Activated T-helper 2 cell treated with anti-CD3 and anti-CD28 coated beads, Interferon-gamma antibody, Interleukin-2, Interleukin-4, amounts not matched to agents 10 μg/mL and 5 μg/mL and 100 μg/mL, durations not matched to agents 14 hours and 24 hours and 36 hours (primary cell): ENCODE measurements at regions of chr12 and their contacts with region 1.

Region 1: GRCh38 chr12:109713187-109713984 is at the start of gene FAM222A:
- DNase-seq: peak; percentile 94
- H3K4me3 Mint-ChIP-seq: peak within 1 kb of the TSS; percentile 66
- H3K27ac Mint-ChIP-seq: no peak within 1 kb of the TSS
- H3K4me1 Mint-ChIP-seq: no peaks in the 10 kb centered on the region
- H3K27me3 Mint-ChIP-seq: peaks cover 43% of the 10 kb centered on the region
- total RNA-seq, gene FAM222A: 1.4 and 1.6 TPM in 2 replicates

Region 2: DNA sequence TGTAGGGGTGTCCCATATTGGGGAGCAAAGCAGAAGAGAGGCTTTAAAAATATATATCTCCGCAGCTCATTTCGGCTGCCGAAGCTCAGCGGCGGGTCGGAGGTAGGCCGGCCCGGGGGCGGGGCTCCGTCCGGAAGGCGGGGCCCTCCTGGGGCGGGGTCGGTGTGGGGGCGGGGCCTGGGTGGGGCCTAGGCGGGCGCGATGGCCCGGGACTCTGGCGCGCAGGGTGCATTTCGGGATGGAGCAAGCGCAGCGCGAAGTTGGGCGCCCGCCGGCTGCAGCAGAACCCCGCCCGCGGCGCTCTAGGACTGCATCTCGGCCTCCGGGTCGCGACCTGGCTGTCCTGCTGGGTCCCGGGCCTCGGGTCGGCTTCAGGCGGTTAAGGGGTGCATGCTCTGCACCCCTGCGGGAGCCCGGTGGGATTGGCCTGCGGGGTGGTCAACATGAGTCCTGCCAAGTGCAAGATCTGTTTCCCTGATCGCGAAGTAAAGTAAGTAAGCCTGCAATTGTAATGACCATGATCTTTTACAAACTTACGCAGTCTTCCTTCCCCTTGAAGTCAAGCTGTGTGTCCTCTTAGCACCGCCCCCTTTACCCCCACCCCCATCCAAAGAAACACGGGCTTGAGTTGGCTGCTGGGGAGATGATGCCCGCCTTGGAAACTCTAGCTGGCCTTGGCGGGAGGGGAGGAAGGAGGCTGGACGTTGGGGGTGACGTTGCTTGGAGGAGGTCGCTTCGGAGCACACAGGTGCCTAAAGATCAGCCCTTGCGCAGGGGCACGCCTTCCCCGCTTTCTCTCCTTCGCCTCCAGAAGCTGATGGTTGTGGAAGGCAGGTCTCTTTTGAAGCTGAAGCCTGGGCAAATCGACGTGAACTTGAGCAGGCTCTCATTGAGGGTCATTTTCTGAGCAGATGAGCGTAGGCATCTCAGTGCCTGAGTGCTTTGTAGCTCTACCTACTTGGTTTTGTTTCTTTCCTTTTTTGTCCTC is 558.6 kb before region 1 on chr12:
- intact Hi-C with region 1: loop called (anchors 5 kb)
- DNase-seq: peak; percentile 78
- H3K4me3 Mint-ChIP-seq: peak overlapping the region; percentile 82
- H3K27ac Mint-ChIP-seq: peak overlapping the region; percentile 71
- H3K4me1 Mint-ChIP-seq: peaks cover 14% of the 10 kb centered on the region
- H3K27me3 Mint-ChIP-seq: peaks cover 9% of the 10 kb centered on the region

Region 3: GRCh38 chr12:109573029-109573913 is 140.1 kb before region 1 on chr12 and contains the starts of genes MMAB and MVK:
- intact Hi-C with region 1: loop called (anchors 1 kb)
- DNase-seq: peak; percentile 99
- H3K4me3 Mint-ChIP-seq: peak within 1 kb of the TSS; percentile 93
- H3K27ac Mint-ChIP-seq: peak within 1 kb of the TSS; percentile 92
- H3K4me1 Mint-ChIP-seq: peaks cover 30% of the 10 kb centered on the region
- H3K27me3 Mint-ChIP-seq: no peaks in the 10 kb centered on the region
- total RNA-seq, gene MMAB: 56.7 and 59.0 TPM in 2 replicates
- total RNA-seq, gene MVK: 28.7 and 33.6 TPM in 2 replicates

Region 4: DNA sequence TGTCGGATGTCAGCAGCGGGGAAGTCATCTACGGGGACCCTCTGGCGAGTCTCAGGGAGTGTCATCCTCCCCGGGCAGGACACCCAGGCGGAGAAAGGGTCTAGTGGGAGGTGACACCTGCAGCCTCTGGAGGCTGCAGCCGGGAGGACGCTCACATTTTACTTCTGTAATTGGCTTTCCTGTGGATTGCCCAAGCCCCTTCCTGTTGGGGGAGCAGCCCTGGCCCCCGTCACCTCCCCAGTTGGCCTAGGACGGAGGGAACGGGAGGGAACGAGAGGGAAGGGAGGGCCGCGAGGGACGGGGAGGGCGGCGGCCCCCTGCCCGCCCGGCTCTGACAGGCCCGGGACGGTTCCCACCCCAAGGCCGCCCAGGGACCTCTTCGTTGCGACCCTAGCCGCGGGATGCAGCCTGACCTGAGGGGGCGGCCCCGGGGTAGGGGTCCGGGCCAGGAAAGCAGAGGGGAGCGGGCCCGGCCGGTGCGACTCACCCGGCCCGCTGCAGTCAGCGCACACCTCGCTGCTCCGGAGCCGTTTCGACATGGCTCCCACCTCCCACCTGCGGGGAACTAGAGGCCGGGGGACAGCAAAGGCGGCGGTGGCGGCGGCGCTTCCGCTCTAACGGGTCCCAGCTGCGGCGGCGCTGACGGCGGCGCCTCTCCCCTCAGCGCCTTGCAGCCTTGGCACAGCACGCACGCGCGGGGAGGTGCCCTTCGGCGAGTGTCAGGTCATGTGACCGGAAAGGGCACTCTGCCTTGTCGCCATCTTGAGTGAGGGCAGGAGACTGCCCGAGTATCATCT is 282.5 kb after region 1 on chr12 and contains the start of gene GIT2:
- intact Hi-C with region 1: loop called (anchors 5 kb)
- DNase-seq: peak; percentile 94
- H3K4me3 Mint-ChIP-seq: peak within 1 kb of the TSS; percentile 98
- H3K27ac Mint-ChIP-seq: peak within 1 kb of the TSS; percentile 91
- H3K4me1 Mint-ChIP-seq: peaks cover 49% of the 10 kb centered on the region
- H3K27me3 Mint-ChIP-seq: no peaks in the 10 kb centered on the region
- total RNA-seq, gene GIT2: 71.1 and 72.3 TPM in 2 replicates

Region 5: DNA sequence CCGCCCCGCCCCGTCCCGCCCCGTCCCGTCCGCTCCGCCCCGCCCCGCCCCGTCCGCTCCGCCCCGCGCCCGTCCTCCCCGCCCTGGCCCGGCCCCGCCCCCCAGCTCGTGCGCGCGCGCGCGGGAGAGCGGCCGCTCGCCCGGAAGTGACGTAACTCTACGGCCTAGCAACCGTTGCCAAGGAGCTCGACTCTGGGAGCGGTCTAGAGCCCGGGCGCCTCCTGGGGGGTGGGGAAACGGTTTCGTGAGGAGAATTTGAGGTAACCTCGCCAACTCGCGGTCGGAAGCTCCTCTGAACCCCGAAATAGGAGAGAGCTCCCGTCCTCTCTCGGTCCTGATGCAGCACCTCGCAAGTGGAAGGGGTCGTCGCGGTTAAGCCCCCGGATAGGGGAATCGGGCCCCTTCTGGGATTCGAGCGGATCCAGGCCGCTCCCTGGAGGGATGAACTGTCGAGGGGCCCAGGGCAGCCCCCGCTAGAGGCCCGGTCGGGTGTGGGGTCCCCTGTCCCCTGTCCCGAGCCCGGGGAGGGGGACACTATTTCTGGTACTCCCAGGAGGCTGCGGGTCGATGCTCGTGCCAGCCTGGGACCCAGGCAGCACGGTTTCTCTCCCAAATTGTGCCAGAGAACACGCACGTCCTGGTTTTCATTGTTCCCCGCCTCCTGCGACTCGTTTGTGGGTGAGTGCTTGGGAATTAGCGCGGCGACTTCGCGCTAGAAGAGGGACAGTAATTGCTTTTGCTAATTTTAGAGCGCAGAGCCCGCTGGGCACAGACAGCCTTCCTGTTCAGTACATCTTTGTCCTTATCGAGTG is 411.0 kb after region 1 on chr12 and contains the start of gene IFT81:
- intact Hi-C with region 1: loop called (anchors 10 kb)
- DNase-seq: peak; percentile 91
- H3K4me3 Mint-ChIP-seq: peak within 1 kb of the TSS; percentile 89
- H3K27ac Mint-ChIP-seq: peak within 1 kb of the TSS; percentile 42
- H3K4me1 Mint-ChIP-seq: peaks cover 10% of the 10 kb centered on the region
- H3K27me3 Mint-ChIP-seq: peaks cover 21% of the 10 kb centered on the region
- total RNA-seq, gene IFT81: 1.3 and 1.6 TPM in 2 replicates